Mammary epithelial cell (primary cell): ENCODE measurements at regions of chr1 and their contacts with region 1.

Region 1: GRCh38 chr1:66446261-66447001 is 87.5 kb upstream of the SGIP1 start:
- DNase-seq: peak; percentile 46
- H3K4me3 ChIP-seq: no peak overlapping the region
- H3K27ac ChIP-seq: no peak overlapping the region
- H3K4me1 ChIP-seq: no peaks in the 10 kb centered on the region
- H3K27me3 ChIP-seq: peaks cover 3% of the 10 kb centered on the region
- CTCF ChIP-seq: peak; percentile 77 to 85

Region 2: DNA sequence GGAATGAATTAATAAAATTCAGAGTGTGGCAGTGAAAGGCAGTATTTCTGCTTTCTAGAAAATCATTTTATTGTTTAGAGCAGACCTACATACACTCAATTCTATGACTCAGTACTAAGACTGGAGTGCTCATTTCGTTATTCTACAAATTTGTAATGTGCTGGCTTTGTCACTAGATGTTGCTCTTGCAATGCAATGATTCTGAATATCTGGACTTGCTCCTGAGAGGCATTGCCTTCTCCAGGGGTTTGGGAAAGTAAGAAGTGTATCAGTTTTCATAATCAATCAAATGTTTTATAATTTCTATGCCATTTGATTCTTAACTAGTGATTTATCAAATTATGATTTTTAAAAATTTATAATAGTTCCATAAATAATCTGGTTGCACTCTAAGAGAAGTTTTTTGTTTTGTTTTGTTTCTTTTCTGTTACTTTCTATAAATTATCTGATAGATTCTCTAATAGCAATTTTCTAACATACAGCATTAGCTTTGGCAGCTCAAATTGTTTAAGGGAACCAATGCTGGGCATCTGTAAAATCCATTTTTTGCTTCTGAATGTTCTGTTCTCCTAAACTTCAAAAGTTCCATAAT is 193.0 kb before region 1 on chr1:
- CTCF ChIA-PET with region 1: no interaction called
- dilution Hi-C with region 1: no loop called
- in situ Hi-C with region 1: loop called in 1 of 2 experiments (anchors 5 kb)
- intact Hi-C with region 1: loop called (anchors 1 kb)
- DNase-seq: peak; percentile 76
- H3K4me3 ChIP-seq: no peak overlapping the region
- H3K27ac ChIP-seq: no peak overlapping the region
- H3K4me1 ChIP-seq: no peaks in the 10 kb centered on the region
- H3K27me3 ChIP-seq: no peaks in the 10 kb centered on the region
- CTCF ChIP-seq: peak; percentile 84 to 91

Region 3: DNA sequence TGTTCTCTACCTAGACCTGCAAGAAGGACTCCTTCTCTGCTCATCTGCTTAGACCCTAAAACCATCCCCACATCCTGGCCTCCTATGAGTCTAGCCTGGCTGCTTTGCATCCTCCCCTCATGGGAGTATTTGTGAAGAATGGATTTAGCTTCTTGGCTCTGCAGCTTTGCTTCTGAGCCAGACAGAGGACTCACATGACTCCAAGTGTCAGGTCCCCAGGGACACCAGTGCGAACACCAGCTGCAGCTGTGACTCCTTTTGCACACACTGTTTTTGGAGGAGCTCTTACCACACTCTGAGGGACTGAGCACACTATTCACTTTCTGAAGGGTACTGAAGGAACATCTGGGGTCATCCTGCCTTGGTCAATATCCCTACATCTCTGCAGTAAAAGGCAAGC is 44.2 kb before region 1 on chr1:
- CTCF ChIA-PET with region 1: no interaction called
- dilution Hi-C with region 1: no loop called
- in situ Hi-C with region 1: no loop called
- intact Hi-C with region 1: no loop called
- DNase-seq: no peak
- H3K4me3 ChIP-seq: no peak overlapping the region
- H3K27ac ChIP-seq: no peak overlapping the region
- H3K4me1 ChIP-seq: no peaks in the 10 kb centered on the region
- H3K27me3 ChIP-seq: peaks cover 5% of the 10 kb centered on the region
- CTCF ChIP-seq: no peak

Region 4: DNA sequence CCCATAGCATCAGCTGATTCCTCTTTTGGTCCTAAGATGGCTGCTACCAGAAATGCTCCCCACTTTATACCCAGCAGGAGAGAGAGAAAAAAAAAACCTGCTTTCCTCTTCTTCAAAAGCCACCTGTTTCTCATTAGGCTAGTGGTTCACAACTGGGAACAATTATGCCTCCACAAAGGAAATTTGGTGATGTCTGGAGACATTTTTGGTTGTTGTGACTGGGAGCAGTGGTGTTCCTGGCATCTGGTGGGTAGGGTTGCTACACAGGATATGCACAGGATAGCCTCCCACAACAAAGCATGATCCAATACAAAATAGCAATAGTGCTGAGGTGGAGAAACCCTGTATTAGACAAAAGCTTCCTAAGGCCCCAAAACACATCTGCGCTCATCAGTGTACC is 49.1 kb after region 1 on chr1:
- CTCF ChIA-PET with region 1: no interaction called
- dilution Hi-C with region 1: no loop called
- in situ Hi-C with region 1: no loop called
- intact Hi-C with region 1: no loop called
- DNase-seq: no peak
- H3K4me3 ChIP-seq: no peak overlapping the region
- H3K27ac ChIP-seq: no peak overlapping the region
- H3K4me1 ChIP-seq: no peaks in the 10 kb centered on the region
- H3K27me3 ChIP-seq: peaks cover 2% of the 10 kb centered on the region
- CTCF ChIP-seq: no peak

Region 5: GRCh38 chr1:66711420-66711819 is 265.0 kb after region 1 on chr1:
- CTCF ChIA-PET with region 1: no interaction called
- dilution Hi-C with region 1: no loop called
- in situ Hi-C with region 1: no loop called
- intact Hi-C with region 1: loop called (anchors 5 kb)
- DNase-seq: no peak
- H3K4me3 ChIP-seq: no peak overlapping the region
- H3K27ac ChIP-seq: no peak overlapping the region
- H3K4me1 ChIP-seq: no peaks in the 10 kb centered on the region
- H3K27me3 ChIP-seq: peaks cover 8% of the 10 kb centered on the region
- CTCF ChIP-seq: peak; percentile 19 to 33